CD8-positive, alpha-beta memory T cell (primary cell): ENCODE measurements at regions of chrX and their contacts with region 1.

Region 1: DNA sequence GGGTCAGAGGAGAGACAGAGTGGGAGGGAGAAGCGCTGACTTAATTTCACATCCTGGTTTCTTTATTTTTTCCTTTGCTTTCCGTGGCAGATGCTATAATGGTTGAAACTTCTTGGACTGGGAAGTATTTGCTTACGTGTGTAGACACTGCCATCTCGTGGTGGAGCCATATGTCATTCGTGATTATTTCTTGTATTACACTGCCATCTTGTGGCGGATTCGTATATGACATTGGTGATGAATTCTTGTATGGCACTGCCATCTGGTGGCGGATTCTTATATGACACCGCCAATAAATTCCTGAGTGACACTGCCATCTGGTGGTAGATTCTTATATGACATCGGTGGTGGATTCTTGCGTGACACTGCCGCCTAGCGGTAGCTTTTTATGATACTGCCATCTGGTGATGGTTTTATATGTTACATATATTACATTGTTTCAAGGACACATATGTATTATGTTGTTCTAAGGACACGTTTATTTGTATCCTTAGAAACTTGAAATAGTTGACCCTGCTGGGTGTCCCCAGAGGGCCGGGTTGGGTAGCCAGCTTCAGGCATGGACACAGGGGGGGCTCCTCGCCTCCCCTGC is 37.3 kb upstream of the CLCN4 start:
- DNase-seq: peak; percentile 49 to 81 (median 79)
- H3K4me3 ChIP-seq: no peak overlapping the region
- H3K4me3 Mint-ChIP-seq: peak overlapping the region in 2 of 7 donors; percentile 1 to 18
- H3K27ac ChIP-seq: no peak overlapping the region
- H3K27ac Mint-ChIP-seq: peak overlapping the region; percentile 4 to 90 (median 74)
- H3K4me1 ChIP-seq: no peaks in the 10 kb centered on the region
- H3K4me1 Mint-ChIP-seq: peaks cover 7 to 39% (median 28%) of the 10 kb centered on the region in 3 donors
- H3K27me3 ChIP-seq: no peaks in the 10 kb centered on the region
- H3K27me3 Mint-ChIP-seq: no peaks in the 10 kb centered on the region

Region 2: GRCh38 chrX:9995855-9996339 is 123.6 kb before region 1 on chrX:
- CTCF ChIA-PET with region 1: interaction called, 25 read pairs
- POLR2A ChIA-PET with region 1: no interaction called
- DNase-seq: peak; percentile 67 to 83 (median 72)
- H3K4me3 ChIP-seq: no peak overlapping the region
- H3K4me3 Mint-ChIP-seq: no peak overlapping the region
- H3K27ac ChIP-seq: no peak overlapping the region
- H3K27ac Mint-ChIP-seq: no peak overlapping the region
- H3K4me1 ChIP-seq: no peaks in the 10 kb centered on the region
- H3K4me1 Mint-ChIP-seq: peaks cover 0 to 5% (median 1%) of the 10 kb centered on the region in 3 donors
- H3K27me3 ChIP-seq: no peaks in the 10 kb centered on the region
- H3K27me3 Mint-ChIP-seq: peaks cover 0 to 3% of the 10 kb centered on the region in 2 donors

Region 3: GRCh38 chrX:10011261-10011931 is 108.1 kb before region 1 on chrX:
- CTCF ChIA-PET with region 1: interaction called, 11 read pairs
- POLR2A ChIA-PET with region 1: no interaction called
- DNase-seq: no peak
- H3K4me3 ChIP-seq: no peak overlapping the region
- H3K4me3 Mint-ChIP-seq: peak overlapping the region in 3 of 7 donors; percentile 7 to 55 (median 26)
- H3K27ac ChIP-seq: no peak overlapping the region
- H3K27ac Mint-ChIP-seq: peak overlapping the region in 6 of 8 donors; percentile 22 to 86 (median 64)
- H3K4me1 ChIP-seq: peaks cover 8% of the 10 kb centered on the region
- H3K4me1 Mint-ChIP-seq: peaks cover 15 to 25% (median 25%) of the 10 kb centered on the region in 3 donors
- H3K27me3 ChIP-seq: no peaks in the 10 kb centered on the region
- H3K27me3 Mint-ChIP-seq: peaks cover 0 to 6% of the 10 kb centered on the region in 2 donors

Region 4: GRCh38 chrX:10138726-10139125 is 19.2 kb after region 1 on chrX:
- CTCF ChIA-PET with region 1: no interaction called
- POLR2A ChIA-PET with region 1: no interaction called
- DNase-seq: no peak
- H3K4me3 ChIP-seq: no peak overlapping the region
- H3K4me3 Mint-ChIP-seq: no peak overlapping the region
- H3K27ac ChIP-seq: no peak overlapping the region
- H3K27ac Mint-ChIP-seq: no peak overlapping the region
- H3K4me1 ChIP-seq: no peaks in the 10 kb centered on the region
- H3K4me1 Mint-ChIP-seq: no peaks in the 10 kb centered on the region
- H3K27me3 ChIP-seq: no peaks in the 10 kb centered on the region
- H3K27me3 Mint-ChIP-seq: peaks cover 0 to 2% of the 10 kb centered on the region in 2 donors

Region 5: DNA sequence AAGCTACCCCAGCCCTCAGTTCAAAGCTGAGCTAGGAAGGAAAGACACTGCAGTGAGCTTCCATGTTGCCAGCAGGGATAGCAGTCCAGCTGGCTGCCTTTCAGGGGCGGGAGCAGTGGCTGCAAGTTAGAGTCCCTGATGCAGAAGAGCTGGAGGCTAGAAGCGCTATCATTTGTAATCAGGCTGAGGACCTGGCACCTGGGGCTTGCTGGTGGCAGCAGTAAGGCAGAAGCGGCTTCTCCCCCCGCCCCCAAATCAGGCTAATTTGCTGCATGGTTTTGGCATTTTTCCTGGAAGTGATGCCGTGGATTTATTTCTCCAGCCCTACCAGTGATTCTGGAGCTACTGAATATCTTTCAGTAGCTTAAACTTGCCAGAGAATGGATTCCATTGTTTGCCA is 240.6 kb after region 1 on chrX:
- CTCF ChIA-PET with region 1: no interaction called
- POLR2A ChIA-PET with region 1: no interaction called
- DNase-seq: no peak
- H3K4me3 ChIP-seq: no peak overlapping the region
- H3K4me3 Mint-ChIP-seq: no peak overlapping the region
- H3K27ac ChIP-seq: no peak overlapping the region
- H3K27ac Mint-ChIP-seq: no peak overlapping the region
- H3K4me1 ChIP-seq: no peaks in the 10 kb centered on the region
- H3K4me1 Mint-ChIP-seq: no peaks in the 10 kb centered on the region
- H3K27me3 ChIP-seq: no peaks in the 10 kb centered on the region
- H3K27me3 Mint-ChIP-seq: peaks cover 0 to 2% of the 10 kb centered on the region in 2 donors